Activated CD4-positive, alpha-beta memory T cell treated with anti-CD3 and anti-CD28 coated beads, Interleukin-2, amount 10 ng/mL, durations not matched to agents 7 days and 5 days (primary cell): ENCODE measurements at regions of chr6 and their contacts with region 1.

Region 1: DNA sequence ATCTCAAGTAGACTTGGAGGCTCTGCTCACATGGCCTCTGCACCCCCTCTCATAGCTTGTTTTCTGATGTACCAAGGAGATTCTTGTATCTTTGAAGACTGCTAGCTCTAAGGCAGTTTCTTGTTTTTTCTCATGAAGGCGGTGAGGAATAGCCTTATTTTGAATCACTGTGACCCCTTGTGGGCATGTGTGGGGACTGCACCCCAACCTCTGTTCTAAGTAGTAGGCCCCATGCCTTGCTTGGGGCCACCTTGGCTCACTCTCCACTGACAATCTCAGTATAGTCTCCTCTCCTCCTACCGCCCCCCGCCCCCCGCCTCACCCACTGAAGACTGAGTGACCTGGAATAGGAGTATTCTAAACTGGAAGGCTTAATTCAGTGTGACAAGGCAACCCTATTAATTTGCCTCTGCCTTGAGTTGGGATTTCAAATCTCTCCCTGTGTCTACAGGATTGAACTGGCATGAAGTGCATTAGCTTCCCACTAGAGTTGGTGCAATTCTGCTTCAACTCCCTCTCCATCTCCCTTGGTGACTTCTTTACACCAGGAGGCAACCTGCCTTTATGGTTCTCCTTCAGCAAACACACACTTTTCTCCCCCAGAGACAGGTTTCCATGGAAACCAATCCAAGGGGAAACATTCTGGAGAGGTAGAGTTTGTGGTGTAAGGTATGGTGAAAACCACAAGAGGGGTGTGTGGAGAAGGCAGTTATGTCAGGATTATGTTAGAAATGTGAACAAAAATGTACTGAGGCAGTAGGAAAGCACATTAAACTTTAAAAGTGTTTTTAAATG is 75.5 kb upstream of the ECI2 start:
- DNase-seq: peak; percentile 67
- H3K4me3 Mint-ChIP-seq: no peak overlapping the region
- H3K27ac Mint-ChIP-seq: no peak overlapping the region
- H3K4me1 Mint-ChIP-seq: peaks cover 19% of the 10 kb centered on the region
- H3K27me3 Mint-ChIP-seq: peaks cover 4% of the 10 kb centered on the region

Region 2: DNA sequence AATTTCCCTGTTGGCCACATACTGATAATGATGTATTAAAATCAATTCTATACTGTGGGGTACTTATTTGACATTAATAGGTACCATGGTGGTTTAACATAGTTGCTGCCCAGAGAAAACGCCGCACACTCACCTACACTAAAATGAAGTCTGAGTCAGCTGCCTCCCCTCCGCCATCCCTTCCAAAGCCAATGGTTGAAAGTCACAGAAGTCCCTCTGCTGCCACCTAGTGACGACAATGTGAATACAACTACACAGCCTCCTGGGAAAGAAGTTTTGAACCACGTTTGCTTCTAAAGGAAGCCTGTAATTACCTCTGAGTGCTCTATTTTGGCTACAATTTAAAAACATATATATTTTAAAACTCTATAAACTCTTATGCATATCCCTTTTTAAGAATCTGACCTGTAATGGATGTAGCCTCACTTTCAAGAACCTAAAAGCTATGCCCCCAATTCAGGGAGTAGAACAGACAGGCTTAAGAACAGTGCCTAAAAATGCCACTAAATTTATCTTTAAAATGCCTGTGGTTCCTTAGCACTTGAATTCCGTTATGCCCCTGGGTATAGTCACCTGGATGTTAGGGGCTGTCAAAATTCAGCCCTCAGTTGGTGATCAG is 54.9 kb before region 1 on chr6:
- CTCF ChIA-PET with region 1: interaction called, 12 read pairs
- POLR2A ChIA-PET with region 1: no interaction called
- DNase-seq: peak; percentile 82
- H3K4me3 Mint-ChIP-seq: no peak overlapping the region
- H3K27ac Mint-ChIP-seq: no peak overlapping the region
- H3K4me1 Mint-ChIP-seq: peaks cover 8% of the 10 kb centered on the region
- H3K27me3 Mint-ChIP-seq: peaks cover 3% of the 10 kb centered on the region

Region 3: GRCh38 chr6:4174042-4174441 is 36.8 kb before region 1 on chr6:
- CTCF ChIA-PET with region 1: interaction called, 12 read pairs
- POLR2A ChIA-PET with region 1: no interaction called
- DNase-seq: no peak
- H3K4me3 Mint-ChIP-seq: no peak overlapping the region
- H3K27ac Mint-ChIP-seq: no peak overlapping the region
- H3K4me1 Mint-ChIP-seq: no peaks in the 10 kb centered on the region
- H3K27me3 Mint-ChIP-seq: no peaks in the 10 kb centered on the region

Region 4: GRCh38 chr6:4270776-4271175 is 60.0 kb after region 1 on chr6:
- CTCF ChIA-PET with region 1: no interaction called
- POLR2A ChIA-PET with region 1: no interaction called
- DNase-seq: no peak
- H3K4me3 Mint-ChIP-seq: no peak overlapping the region
- H3K27ac Mint-ChIP-seq: no peak overlapping the region
- H3K4me1 Mint-ChIP-seq: no peaks in the 10 kb centered on the region
- H3K27me3 Mint-ChIP-seq: peaks cover 9% of the 10 kb centered on the region